Endothelial cell of umbilical vein (primary cell): ENCODE measurements at regions of chr7 and their contacts with region 1.

Region 1: GRCh38 chr7:43582503-43583423 is at the start of gene STK17A:
- DNase-seq: peak; percentile 92
- H3K4me3 ChIP-seq: peak within 1 kb of the TSS; percentile 74 to 89 (median 76)
- H3K27ac ChIP-seq: peak within 1 kb of the TSS; percentile 49
- H3K4me1 ChIP-seq: peaks cover 33% of the 10 kb centered on the region
- H3K27me3 ChIP-seq: peaks cover 2 to 12% of the 10 kb centered on the region in 2 experiments
- CTCF ChIP-seq: peak; percentile 97 to 100
- POLR2A ChIP-seq: peak; percentile 96
- total RNA-seq, gene STK17A: 53.9 and 58.8 TPM in 2 replicates

Region 2: DNA sequence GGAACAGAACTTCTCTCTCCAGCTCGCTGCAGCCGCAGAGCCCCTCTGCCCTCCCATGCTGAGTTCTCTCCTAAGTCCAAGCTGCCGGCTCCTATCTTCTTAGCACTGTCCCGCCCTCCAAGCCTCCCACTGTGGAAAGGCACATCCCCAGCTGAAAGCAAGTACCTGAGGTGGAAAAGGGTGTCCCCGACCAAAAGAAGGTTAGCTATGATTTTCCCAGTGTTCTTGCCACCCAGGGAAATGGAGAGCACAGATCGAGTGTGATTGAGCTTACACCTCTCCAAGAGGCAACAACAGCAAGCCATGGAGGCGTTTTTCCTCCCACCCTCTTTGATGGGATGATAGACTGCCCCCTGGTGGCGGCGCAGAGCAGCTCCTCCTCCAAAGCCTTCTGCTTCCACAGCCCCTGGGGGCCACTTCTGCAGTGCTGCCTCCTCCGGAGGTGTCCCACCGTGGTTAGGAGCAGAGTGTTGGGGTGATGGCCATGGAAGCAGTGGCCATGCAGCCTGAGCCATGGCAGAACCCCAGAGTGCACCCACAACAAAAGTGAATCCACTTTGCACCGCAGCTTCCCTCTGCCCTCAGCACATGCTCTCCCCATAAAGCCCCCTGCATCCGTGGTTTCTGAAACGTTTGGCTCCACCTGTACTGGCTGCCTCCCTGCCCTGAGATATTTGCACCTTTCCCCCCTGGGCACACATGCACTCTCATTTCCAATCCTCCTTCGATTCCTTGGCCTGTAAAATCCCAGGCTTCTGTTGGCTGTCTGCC is 142.9 kb before region 1 on chr7:
- CTCF ChIA-PET with region 1: interaction called, 11 read pairs
- POLR2A ChIA-PET with region 1: no interaction called
- dilution Hi-C with region 1: no loop called
- intact Hi-C with region 1: no loop called
- DNase-seq: peak; percentile 37
- H3K4me3 ChIP-seq: no peak overlapping the region
- H3K27ac ChIP-seq: no peak overlapping the region
- H3K4me1 ChIP-seq: no peaks in the 10 kb centered on the region
- H3K27me3 ChIP-seq: peaks cover 0 to 2% of the 10 kb centered on the region in 2 experiments
- CTCF ChIP-seq: peak; percentile 77 to 95
- POLR2A ChIP-seq: no peak

Region 3: GRCh38 chr7:43612599-43613589 is 30.1 kb after region 1 on chr7:
- CTCF ChIA-PET with region 1: interaction called, 14 read pairs
- POLR2A ChIA-PET with region 1: interaction called, 5 read pairs
- dilution Hi-C with region 1: no loop called
- intact Hi-C with region 1: no loop called
- DNase-seq: no peak
- H3K4me3 ChIP-seq: no peak overlapping the region
- H3K27ac ChIP-seq: no peak overlapping the region
- H3K4me1 ChIP-seq: peaks cover 12% of the 10 kb centered on the region
- H3K27me3 ChIP-seq: no peaks in the 10 kb centered on the region
- CTCF ChIP-seq: no peak
- POLR2A ChIP-seq: no peak

Region 4: DNA sequence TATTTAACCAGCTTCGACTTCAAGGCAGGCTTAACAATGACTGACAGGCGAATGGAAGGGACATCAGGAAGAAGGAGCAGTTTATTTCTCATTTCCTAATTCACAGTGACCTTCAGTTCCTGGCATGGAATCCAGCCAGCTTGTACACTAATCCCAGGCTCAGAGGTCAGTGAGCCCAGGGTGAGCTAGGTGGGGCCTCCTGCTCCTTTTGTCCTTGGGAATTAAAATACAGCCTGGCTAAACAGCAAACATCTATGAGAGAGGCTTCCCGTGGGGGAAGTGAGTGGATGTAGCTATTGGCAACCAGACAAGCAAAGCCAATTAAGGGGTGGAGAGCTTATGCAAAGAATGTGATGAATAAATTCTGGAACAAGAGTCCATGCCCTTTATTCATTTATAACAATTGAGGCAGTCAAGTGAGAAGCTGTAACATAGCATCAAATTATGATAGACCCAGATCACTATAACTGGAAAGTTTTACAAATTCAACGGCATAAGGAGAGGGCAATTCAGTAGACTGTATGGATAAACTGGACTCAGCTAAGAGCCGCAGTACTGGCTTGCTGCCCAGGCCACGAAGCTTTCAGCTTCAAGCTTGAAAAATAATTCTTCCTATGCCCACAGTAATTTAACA is 57.2 kb after region 1 on chr7:
- CTCF ChIA-PET with region 1: interaction called, 126 read pairs
- POLR2A ChIA-PET with region 1: interaction called, 18 read pairs
- dilution Hi-C with region 1: no loop called
- intact Hi-C with region 1: loop called (anchors 1 kb)
- DNase-seq: peak; percentile 98
- H3K4me3 ChIP-seq: no peak overlapping the region
- H3K27ac ChIP-seq: peak overlapping the region; percentile 97
- H3K4me1 ChIP-seq: peaks cover 47% of the 10 kb centered on the region
- H3K27me3 ChIP-seq: no peaks in the 10 kb centered on the region
- CTCF ChIP-seq: no peak
- POLR2A ChIP-seq: no peak

Region 5: DNA sequence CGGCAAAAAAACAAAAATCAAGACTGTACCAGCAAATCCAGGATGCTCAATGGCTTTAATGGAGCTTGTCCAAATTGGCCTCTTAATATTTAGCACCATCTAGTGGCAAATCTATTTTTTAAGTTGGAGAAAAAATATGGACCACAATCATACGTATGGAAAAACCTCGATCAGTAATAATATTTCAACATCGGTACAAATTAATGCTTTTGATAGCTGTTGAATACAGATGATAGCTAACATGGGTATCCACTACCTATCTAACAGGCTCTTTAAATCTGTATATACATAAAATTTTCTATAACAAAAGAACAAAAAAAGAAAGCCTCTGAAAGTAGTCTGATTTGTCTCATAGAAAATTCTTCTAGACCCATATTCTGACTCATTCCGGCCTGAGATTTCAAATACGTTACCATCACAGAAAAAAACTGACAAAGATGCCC is 117.3 kb after region 1 on chr7:
- CTCF ChIA-PET with region 1: interaction called, 603 read pairs
- POLR2A ChIA-PET with region 1: interaction called, 73 read pairs
- dilution Hi-C with region 1: loop called (anchors 25 kb)
- intact Hi-C with region 1: loop called (anchors 1 kb)
- DNase-seq: peak; percentile 69
- H3K4me3 ChIP-seq: no peak overlapping the region
- H3K27ac ChIP-seq: no peak overlapping the region
- H3K4me1 ChIP-seq: peaks cover 6% of the 10 kb centered on the region
- H3K27me3 ChIP-seq: no peaks in the 10 kb centered on the region
- CTCF ChIP-seq: peak; percentile 22 to 34
- POLR2A ChIP-seq: no peak

Region 6: GRCh38 chr7:43834463-43835251 is 251.9 kb after region 1 on chr7:
- CTCF ChIA-PET with region 1: interaction called, 38 read pairs
- POLR2A ChIA-PET with region 1: interaction called, 5 read pairs
- dilution Hi-C with region 1: no loop called
- intact Hi-C with region 1: loop called (anchors 1 kb)
- DNase-seq: peak; percentile 22
- H3K4me3 ChIP-seq: no peak overlapping the region
- H3K27ac ChIP-seq: no peak overlapping the region
- H3K4me1 ChIP-seq: no peaks in the 10 kb centered on the region
- H3K27me3 ChIP-seq: peaks cover 0 to 3% of the 10 kb centered on the region in 2 experiments
- CTCF ChIP-seq: no peak
- POLR2A ChIP-seq: no peak